CD8-positive, alpha-beta memory T cell (primary cell): ENCODE measurements at regions of chr15 and their contacts with region 1.

Region 1: GRCh38 chr15:76905013-76905839 is at the start of gene SCAPER:
- DNase-seq: peak; percentile 88 to 93 (median 90)
- H3K4me3 ChIP-seq: peak within 1 kb of the TSS; percentile 86
- H3K4me3 Mint-ChIP-seq: peak within 1 kb of the TSS; percentile 84 to 97 (median 94)
- H3K27ac ChIP-seq: peak within 1 kb of the TSS; percentile 60
- H3K27ac Mint-ChIP-seq: peak within 1 kb of the TSS; percentile 91 to 99 (median 97)
- H3K4me1 ChIP-seq: peaks cover 24% of the 10 kb centered on the region
- H3K4me1 Mint-ChIP-seq: peaks cover 32 to 39% (median 33%) of the 10 kb centered on the region in 3 donors
- H3K27me3 ChIP-seq: no peaks in the 10 kb centered on the region
- H3K27me3 Mint-ChIP-seq: peaks cover 0 to 2% of the 10 kb centered on the region in 2 donors
- total RNA-seq, gene SCAPER: 15.5 to 16.0 TPM

Region 2: GRCh38 chr15:76916369-76916768 is 11.1 kb after region 1 on chr15:
- CTCF ChIA-PET with region 1: no interaction called
- POLR2A ChIA-PET with region 1: no interaction called
- DNase-seq: no peak
- H3K4me3 ChIP-seq: no peak overlapping the region
- H3K4me3 Mint-ChIP-seq: no peak overlapping the region
- H3K27ac ChIP-seq: no peak overlapping the region
- H3K27ac Mint-ChIP-seq: no peak overlapping the region
- H3K4me1 ChIP-seq: no peaks in the 10 kb centered on the region
- H3K4me1 Mint-ChIP-seq: no peaks in the 10 kb centered on the region
- H3K27me3 ChIP-seq: no peaks in the 10 kb centered on the region
- H3K27me3 Mint-ChIP-seq: peaks cover 3 to 25% of the 10 kb centered on the region in 2 donors

Region 3: DNA sequence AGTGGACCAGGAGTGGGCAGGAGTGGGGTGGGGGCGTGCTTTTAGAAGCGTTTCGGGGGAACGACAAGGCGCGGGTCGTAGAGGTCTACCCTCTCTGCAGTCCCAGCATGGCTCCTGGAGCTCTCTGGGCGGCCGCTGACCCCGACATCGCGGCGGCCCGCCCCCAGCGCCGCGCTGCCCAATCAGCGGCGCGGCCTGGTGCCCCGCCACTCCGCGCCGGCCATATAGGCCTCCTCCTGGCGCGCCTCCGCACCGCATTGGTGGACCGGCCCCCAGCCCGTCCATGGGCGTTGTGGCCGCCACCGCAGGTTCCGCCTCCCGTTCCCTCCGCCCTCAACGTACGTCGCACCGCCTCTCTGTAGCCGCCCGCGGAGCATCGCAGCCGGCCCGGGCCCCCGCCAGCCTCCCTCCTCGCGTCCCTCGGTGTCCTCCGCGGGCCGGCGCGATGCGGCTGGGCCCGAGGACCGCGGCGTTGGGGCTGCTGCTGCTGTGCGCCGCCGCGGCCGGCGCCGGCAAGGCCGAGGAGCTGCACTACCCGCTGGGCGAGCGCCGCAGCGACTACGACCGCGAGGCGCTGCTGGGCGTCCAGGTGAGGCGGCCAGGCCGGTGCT is 26.3 kb after region 1 on chr15 and contains the start of gene RCN2:
- CTCF ChIA-PET with region 1: interaction called, 3 read pairs
- POLR2A ChIA-PET with region 1: interaction called, 14 read pairs
- DNase-seq: peak; percentile 88 to 93 (median 92)
- H3K4me3 ChIP-seq: peak within 1 kb of the TSS; percentile 68
- H3K4me3 Mint-ChIP-seq: peak within 1 kb of the TSS; percentile 88 to 96 (median 93)
- H3K27ac ChIP-seq: peak within 1 kb of the TSS; percentile 76
- H3K27ac Mint-ChIP-seq: peak within 1 kb of the TSS; percentile 82 to 99 (median 92)
- H3K4me1 ChIP-seq: peaks cover 20% of the 10 kb centered on the region
- H3K4me1 Mint-ChIP-seq: peaks cover 31 to 46% (median 45%) of the 10 kb centered on the region in 3 donors
- H3K27me3 ChIP-seq: no peaks in the 10 kb centered on the region
- H3K27me3 Mint-ChIP-seq: peaks cover 3% of the 10 kb centered on the region in 2 donors
- total RNA-seq, gene RCN2: 35.9 to 37.1 TPM